ENCODE measurements at regions of chr6 and their contacts with region 1.

Region 1: GRCh38 chr6:26196846-26197648 is 109.8 kb downstream of the HFE start:
- DNase-seq: peak; percentile 81
- H3K4me3 ChIP-seq: peak overlapping the region; percentile 84 to 96
- H3K27ac ChIP-seq: peak overlapping the region; percentile 87 to 94
- H3K4me1 ChIP-seq: peaks cover 12 to 16% of the 10 kb centered on the region in 2 experiments; a peak in 3 of 4 replicates
- H3K27me3 ChIP-seq: no peaks in the 10 kb centered on the region
- CTCF ChIP-seq: peak; percentile 19; the same call in 1 of the 2 replicates
- EP300 ChIP-seq: peak in 1 of 2 experiments; percentile 43; a peak in 1 of 4 replicates
- RAD21 ChIP-seq: no peak

Region 2: GRCh38 chr6:26031595-26032339 is 165.3 kb before region 1 on chr6:
- CTCF ChIA-PET with region 1: no interaction called
- POLR2A ChIA-PET with region 1: interaction called, 31 read pairs
- DNase-seq: peak; percentile 89
- H3K4me3 ChIP-seq: peak overlapping the region; percentile 73 to 84
- H3K27ac ChIP-seq: peak overlapping the region; percentile 92 to 99
- H3K4me1 ChIP-seq: peaks cover 10 to 23% of the 10 kb centered on the region in 2 experiments; a peak in 3 of 4 replicates
- H3K27me3 ChIP-seq: no peaks in the 10 kb centered on the region
- CTCF ChIP-seq: peak; percentile 30
- EP300 ChIP-seq: peak; percentile 52 to 61; a peak in 2 of 4 replicates
- RAD21 ChIP-seq: no peak

Region 3: DNA sequence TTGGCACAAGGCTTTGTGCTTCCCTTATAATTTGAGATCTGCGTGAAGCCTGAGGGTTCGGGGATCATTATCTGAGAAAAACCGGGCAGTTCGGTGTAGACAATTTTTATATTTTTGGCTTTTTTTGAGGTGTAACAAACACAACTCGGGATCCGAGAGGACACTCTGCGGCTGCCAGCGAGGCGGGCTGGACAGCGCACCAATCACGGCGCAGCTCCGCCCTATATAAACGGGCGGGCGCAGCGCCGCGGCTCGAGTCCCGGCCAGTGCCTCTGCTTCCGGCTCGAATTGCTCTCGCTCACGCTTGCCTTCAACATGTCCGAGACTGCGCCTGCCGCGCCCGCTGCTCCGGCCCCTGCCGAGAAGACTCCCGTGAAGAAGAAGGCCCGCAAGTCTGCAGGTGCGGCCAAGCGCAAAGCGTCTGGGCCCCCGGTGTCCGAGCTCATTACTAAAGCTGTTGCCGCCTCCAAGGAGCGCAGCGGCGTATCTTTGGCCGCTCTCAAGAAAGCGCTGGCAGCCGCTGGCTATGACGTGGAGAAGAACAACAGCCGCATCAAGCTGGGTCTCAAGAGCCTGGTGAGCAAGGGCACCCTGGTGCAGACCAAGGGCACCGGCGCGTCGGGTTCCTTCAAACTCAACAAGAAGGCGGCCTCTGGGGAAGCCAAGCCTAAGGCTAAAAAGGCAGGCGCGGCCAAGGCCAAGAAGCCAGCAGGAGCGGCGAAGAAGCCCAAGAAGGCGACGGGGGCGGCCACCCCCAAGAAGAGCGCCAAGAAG is 40.8 kb before region 1 on chr6:
- CTCF ChIA-PET with region 1: no interaction called
- POLR2A ChIA-PET with region 1: interaction called, 108 read pairs
- DNase-seq: peak; percentile 88
- H3K4me3 ChIP-seq: peak overlapping the region; percentile 82 to 90
- H3K27ac ChIP-seq: peak overlapping the region; percentile 88 to 97
- H3K4me1 ChIP-seq: no peaks in the 10 kb centered on the region; a peak in 3 of 4 replicates
- H3K27me3 ChIP-seq: no peaks in the 10 kb centered on the region
- CTCF ChIP-seq: no peak
- EP300 ChIP-seq: peak in 1 of 2 experiments; percentile 60; a peak in 1 of 4 replicates
- RAD21 ChIP-seq: no peak

Region 4: DNA sequence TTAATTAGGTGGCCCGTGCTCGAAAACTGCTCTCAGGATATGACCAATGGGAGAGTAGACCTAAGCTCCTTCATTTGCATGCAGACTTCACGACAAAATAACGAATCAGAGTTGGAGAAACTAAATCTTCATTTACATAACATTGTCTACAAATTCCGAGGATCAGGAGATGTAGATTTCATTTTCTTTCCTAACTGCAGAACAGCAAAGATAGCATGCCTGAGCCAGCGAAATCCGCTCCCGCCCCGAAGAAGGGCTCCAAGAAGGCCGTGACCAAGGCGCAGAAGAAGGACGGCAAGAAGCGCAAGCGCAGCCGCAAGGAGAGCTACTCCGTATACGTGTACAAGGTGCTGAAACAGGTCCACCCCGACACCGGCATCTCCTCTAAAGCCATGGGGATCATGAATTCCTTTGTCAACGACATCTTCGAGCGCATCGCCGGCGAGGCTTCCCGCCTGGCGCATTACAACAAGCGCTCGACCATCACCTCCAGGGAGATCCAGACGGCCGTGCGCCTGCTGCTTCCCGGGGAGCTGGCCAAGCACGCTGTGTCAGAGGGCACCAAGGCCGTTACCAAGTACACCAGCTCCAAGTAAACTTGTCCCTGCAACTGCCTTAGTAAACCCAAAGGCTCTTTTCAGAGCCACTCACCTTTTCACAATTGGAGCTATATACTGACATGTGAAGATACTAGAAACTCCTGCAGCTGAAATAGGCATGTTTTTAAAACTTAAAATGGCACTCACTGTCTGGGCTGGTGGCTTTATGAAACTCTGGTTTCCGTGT is 13.3 kb before region 1 on chr6:
- CTCF ChIA-PET with region 1: interaction called, 9 read pairs
- POLR2A ChIA-PET with region 1: interaction called, 247 read pairs
- DNase-seq: peak; percentile 71
- H3K4me3 ChIP-seq: peak overlapping the region; percentile 49 to 56
- H3K27ac ChIP-seq: peak overlapping the region; percentile 62 to 97
- H3K4me1 ChIP-seq: peaks cover 4 to 6% of the 10 kb centered on the region in 2 experiments; a peak in 2 of 4 replicates
- H3K27me3 ChIP-seq: no peaks in the 10 kb centered on the region
- CTCF ChIP-seq: no peak
- EP300 ChIP-seq: peak in 1 of 2 experiments; percentile 39; a peak in 1 of 4 replicates
- RAD21 ChIP-seq: no peak

Region 5: GRCh38 chr6:26234421-26235296 is 37.6 kb after region 1 on chr6:
- CTCF ChIA-PET with region 1: no interaction called
- POLR2A ChIA-PET with region 1: interaction called, 25 read pairs
- DNase-seq: peak; percentile 73
- H3K4me3 ChIP-seq: peak overlapping the region; percentile 61 to 72
- H3K27ac ChIP-seq: peak overlapping the region; percentile 77 to 85
- H3K4me1 ChIP-seq: peaks cover 0 to 3% of the 10 kb centered on the region in 2 experiments; a peak in 3 of 4 replicates
- H3K27me3 ChIP-seq: no peaks in the 10 kb centered on the region
- CTCF ChIP-seq: no peak
- EP300 ChIP-seq: peak in 1 of 2 experiments; percentile 52; a peak in 1 of 4 replicates
- RAD21 ChIP-seq: no peak

Region 6: DNA sequence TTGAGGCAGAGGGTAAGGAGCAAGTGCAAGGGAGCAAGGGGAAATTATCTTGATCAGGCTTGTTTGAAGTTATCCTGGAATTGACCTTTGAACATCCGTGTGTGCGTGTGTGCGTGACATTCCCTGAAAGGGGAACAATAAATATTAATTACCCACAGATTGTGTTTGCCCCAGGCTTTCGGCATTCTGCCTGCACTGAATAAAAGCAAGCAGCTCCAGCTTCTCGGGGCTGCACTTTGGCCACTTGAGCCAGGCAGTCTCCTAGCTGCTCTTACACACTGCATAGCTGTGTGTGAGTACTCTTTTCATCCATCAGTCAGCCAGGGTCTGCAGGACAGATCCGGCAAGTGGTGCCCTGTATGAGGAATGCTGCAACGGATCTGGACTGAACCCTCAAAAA is 60.2 kb after region 1 on chr6:
- CTCF ChIA-PET with region 1: no interaction called
- POLR2A ChIA-PET with region 1: no interaction called
- DNase-seq: no peak
- H3K4me3 ChIP-seq: no peak overlapping the region
- H3K27ac ChIP-seq: peak overlapping the region in 1 of 2 experiments; percentile 30; a peak in 2 of 4 replicates
- H3K4me1 ChIP-seq: peaks cover 0 to 15% of the 10 kb centered on the region in 2 experiments; a peak in 2 of 4 replicates
- H3K27me3 ChIP-seq: no peaks in the 10 kb centered on the region
- CTCF ChIP-seq: no peak
- EP300 ChIP-seq: no peak
- RAD21 ChIP-seq: no peak

Region 7: DNA sequence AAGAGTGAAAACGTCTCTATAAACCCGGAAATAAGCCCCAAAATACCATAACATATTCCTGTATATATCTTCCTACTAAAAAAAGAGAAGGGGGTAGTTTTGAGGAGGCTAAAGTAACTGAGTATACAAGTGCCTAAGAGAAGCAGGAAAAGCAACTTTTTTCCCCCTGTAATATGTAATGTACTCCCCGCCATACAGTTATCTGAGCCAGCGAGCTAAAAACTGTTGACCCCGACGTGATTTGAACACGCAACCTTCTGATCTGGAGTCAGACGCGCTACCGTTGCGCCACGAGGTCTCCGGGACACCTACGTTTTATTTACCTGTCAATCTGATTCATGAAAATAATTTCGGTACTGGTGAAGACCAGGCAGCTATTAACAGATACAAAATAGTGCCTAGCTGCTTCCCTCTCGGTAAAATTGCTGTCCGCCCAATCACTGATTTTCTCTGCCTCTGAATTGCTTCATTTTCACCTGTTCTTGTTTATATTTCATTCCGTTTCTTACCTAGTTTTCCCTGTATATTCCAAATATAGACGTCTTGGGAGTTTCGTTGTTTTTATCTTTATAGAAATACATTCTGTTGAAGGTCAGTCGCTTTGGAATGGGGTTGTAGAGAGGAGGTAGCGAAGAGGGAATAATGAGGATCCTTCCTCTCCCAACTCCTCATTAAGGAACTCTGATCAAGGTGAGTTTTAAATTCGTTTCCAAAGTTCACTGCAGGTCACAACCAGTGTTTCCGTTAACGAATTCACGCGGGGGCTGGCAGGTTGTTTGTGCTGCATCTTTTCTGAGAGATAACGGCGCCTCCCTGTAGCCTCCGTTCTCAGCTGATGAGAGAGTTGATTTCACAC is 134.4 kb after region 1 on chr6:
- CTCF ChIA-PET with region 1: no interaction called
- POLR2A ChIA-PET with region 1: no interaction called
- DNase-seq: peak; percentile 9
- H3K4me3 ChIP-seq: peak overlapping the region; percentile 65 to 71
- H3K27ac ChIP-seq: no peak overlapping the region
- H3K4me1 ChIP-seq: peaks cover 2 to 7% of the 10 kb centered on the region in 2 experiments
- H3K27me3 ChIP-seq: no peaks in the 10 kb centered on the region
- CTCF ChIP-seq: no peak
- EP300 ChIP-seq: no peak
- RAD21 ChIP-seq: no peak

Region 8: DNA sequence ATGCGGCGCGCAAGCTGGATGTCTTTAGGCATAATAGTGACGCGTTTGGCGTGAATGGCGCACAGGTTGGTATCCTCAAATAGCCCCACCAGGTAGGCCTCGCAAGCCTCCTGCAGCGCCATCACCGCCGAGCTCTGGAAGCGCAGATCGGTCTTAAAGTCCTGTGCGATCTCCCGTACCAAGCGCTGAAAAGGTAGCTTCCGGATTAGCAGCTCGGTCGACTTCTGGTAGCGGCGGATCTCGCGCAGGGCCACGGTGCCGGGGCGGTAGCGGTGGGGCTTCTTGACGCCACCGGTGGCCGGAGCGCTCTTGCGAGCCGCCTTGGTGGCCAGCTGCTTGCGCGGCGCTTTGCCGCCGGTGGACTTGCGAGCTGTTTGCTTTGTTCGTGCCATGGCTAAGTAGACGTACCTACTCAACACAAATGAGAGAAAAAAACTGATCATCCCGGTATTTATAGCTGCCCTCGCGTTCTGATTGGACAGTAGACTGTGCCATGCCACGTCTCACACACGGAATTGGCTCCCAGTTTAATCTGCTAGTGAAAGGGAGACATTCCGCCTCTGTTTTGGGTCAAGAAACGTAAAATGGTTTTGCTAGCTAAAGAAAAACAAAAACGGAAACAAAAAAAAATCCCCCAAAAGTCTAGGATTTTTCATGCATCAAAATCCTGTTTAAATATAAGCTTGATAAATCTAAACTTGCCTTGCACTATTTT is 1675.0 kb after region 1 on chr6:
- CTCF ChIA-PET with region 1: no interaction called
- POLR2A ChIA-PET with region 1: interaction called, 14 read pairs
- DNase-seq: peak; percentile 91
- H3K4me3 ChIP-seq: peak overlapping the region; percentile 68 to 71
- H3K27ac ChIP-seq: peak overlapping the region; percentile 80 to 97
- H3K4me1 ChIP-seq: peaks cover 0 to 10% of the 10 kb centered on the region in 2 experiments; a peak in 3 of 4 replicates
- H3K27me3 ChIP-seq: no peaks in the 10 kb centered on the region
- CTCF ChIP-seq: peak; percentile 39
- EP300 ChIP-seq: no peak
- RAD21 ChIP-seq: no peak